ENCODE measurements at regions of chr1 and their contacts with region 1.

Region 1: GRCh38 chr1:155208541-155209311 is at the start of gene MTX1:
- DNase-seq: no peak
- H3K4me3 ChIP-seq: peak within 1 kb of the TSS; percentile 96
- H3K27ac ChIP-seq: peak within 1 kb of the TSS; percentile 97
- H3K27me3 ChIP-seq: no peaks in the 10 kb centered on the region
- CTCF ChIP-seq: no peak
- polyA plus RNA-seq, gene MTX1: 44.6 and 62.3 TPM in 2 replicates

Region 2: DNA sequence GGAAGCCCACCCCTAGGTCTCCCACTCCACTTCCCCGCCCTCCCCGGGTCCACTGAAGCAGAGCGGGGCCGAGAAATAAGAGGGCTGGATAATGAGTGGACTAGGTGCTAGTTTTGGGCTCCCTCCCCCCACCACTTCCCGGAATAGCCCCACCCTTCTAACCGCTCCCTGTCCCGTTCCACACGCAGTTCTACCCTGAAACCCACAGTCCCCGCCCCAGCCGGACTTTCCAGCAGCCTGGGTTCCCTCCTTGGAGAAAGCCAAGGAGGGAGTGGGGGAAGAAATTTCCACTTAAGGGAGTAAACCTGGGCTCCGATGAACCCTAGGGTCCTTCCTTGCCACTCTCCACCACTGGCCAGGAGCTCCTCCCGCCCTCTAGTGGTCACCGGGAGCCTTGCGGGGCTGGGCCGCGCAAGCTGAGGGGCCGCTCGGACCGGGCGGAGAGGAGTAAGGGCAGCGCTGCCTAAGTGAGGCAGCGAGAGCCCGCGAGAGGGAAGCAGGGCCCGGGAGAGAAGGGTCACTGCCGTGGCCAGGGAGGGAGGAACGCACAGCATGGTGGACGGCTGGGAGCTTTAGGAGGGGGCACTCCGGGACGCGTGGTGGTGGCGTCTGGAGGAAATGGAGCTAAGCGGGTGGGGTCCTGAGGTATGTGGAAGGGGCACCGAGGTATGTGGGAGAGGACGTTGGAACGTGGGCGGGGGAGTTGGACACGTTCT is 15.3 kb before region 1 on chr1:
- CTCF ChIA-PET with region 1: interaction called, 22 read pairs
- POLR2A ChIA-PET with region 1: interaction called, 9 read pairs
- DNase-seq: peak; percentile 64
- H3K4me3 ChIP-seq: peak overlapping the region; percentile 64
- H3K27ac ChIP-seq: peak overlapping the region; percentile 87
- H3K27me3 ChIP-seq: no peaks in the 10 kb centered on the region
- CTCF ChIP-seq: peak; percentile 97

Region 3: GRCh38 chr1:155244368-155245162 is 35.8 kb after region 1 on chr1:
- CTCF ChIA-PET with region 1: interaction called, 55 read pairs
- POLR2A ChIA-PET with region 1: interaction called, 11 read pairs
- DNase-seq: peak; percentile 99
- H3K4me3 ChIP-seq: peak overlapping the region; percentile 72
- H3K27ac ChIP-seq: peak overlapping the region; percentile 86
- H3K27me3 ChIP-seq: no peaks in the 10 kb centered on the region
- CTCF ChIP-seq: peak; percentile 35; the same call in 1 of the 2 replicates

Measured in AG04450 (cell line).